Heart left ventricle (tissue), 16 donors: ENCODE measurements at regions of chr15 and their contacts with region 1.

Region 1: GRCh38 chr15:31435261-31435911 is 108.8 kb downstream of the KLF13 start:
- DNase-seq: peak; percentile 78 to 90 (median 86)
- ATAC-seq: peak; percentile 82 to 92 (median 86)
- H3K4me3 ChIP-seq: peak overlapping the region in 9 of 12 donors; percentile 8 to 54 (median 30)
- H3K27ac ChIP-seq: peak overlapping the region; percentile 50 to 94 (median 68)
- H3K4me1 ChIP-seq: peaks cover 0 to 52% (median 21%) of the 10 kb centered on the region in 12 donors
- H3K27me3 ChIP-seq: no peaks in the 10 kb centered on the region
- CTCF ChIP-seq: peak; percentile 58 to 95 (median 80)
- POLR2A ChIP-seq: peak in 1 of 2 donors; percentile 10

Region 2: GRCh38 chr15:31200735-31201151 is 234.6 kb before region 1 on chr15:
- intact Hi-C with region 1: loop called in 7 of 10 experiments (anchors 2 to 5 kb)
- DNase-seq: peak; percentile 74 to 88 (median 83)
- ATAC-seq: peak; percentile 72 to 97 (median 93)
- H3K4me3 ChIP-seq: no peak overlapping the region
- H3K27ac ChIP-seq: no peak overlapping the region
- H3K4me1 ChIP-seq: peaks cover 0 to 8% (median 0%) of the 10 kb centered on the region in 12 donors
- H3K27me3 ChIP-seq: no peaks in the 10 kb centered on the region
- CTCF ChIP-seq: peak; percentile 41 to 90 (median 54)
- POLR2A ChIP-seq: no peak

Region 3: GRCh38 chr15:31332020-31332680 is 103.2 kb before region 1 on chr15:
- intact Hi-C with region 1: loop called in 5 of 10 experiments (anchors 2 to 5 kb)
- DNase-seq: no peak
- ATAC-seq: no peak
- H3K4me3 ChIP-seq: no peak overlapping the region
- H3K27ac ChIP-seq: peak overlapping the region in 11 of 12 donors; percentile 15 to 100 (median 50)
- H3K4me1 ChIP-seq: peaks cover 7 to 89% (median 83%) of the 10 kb centered on the region in 12 donors
- H3K27me3 ChIP-seq: no peaks in the 10 kb centered on the region
- CTCF ChIP-seq: no peak
- POLR2A ChIP-seq: no peak

Region 4: GRCh38 chr15:31365655-31366127 is 69.7 kb before region 1 on chr15:
- intact Hi-C with region 1: loop called in 7 of 10 experiments (anchors 1 to 10 kb)
- DNase-seq: peak; percentile 89 to 98 (median 93)
- ATAC-seq: peak; percentile 89 to 92 (median 91)
- H3K4me3 ChIP-seq: peak overlapping the region in 11 of 12 donors; percentile 7 to 47 (median 35)
- H3K27ac ChIP-seq: peak overlapping the region; percentile 87 to 96 (median 92)
- H3K4me1 ChIP-seq: peaks cover 31 to 100% (median 92%) of the 10 kb centered on the region in 12 donors
- H3K27me3 ChIP-seq: no peaks in the 10 kb centered on the region
- CTCF ChIP-seq: peak in 11 of 12 donors; percentile 8 to 66 (median 43)
- POLR2A ChIP-seq: peak in 1 of 2 donors; percentile 31

Region 5: DNA sequence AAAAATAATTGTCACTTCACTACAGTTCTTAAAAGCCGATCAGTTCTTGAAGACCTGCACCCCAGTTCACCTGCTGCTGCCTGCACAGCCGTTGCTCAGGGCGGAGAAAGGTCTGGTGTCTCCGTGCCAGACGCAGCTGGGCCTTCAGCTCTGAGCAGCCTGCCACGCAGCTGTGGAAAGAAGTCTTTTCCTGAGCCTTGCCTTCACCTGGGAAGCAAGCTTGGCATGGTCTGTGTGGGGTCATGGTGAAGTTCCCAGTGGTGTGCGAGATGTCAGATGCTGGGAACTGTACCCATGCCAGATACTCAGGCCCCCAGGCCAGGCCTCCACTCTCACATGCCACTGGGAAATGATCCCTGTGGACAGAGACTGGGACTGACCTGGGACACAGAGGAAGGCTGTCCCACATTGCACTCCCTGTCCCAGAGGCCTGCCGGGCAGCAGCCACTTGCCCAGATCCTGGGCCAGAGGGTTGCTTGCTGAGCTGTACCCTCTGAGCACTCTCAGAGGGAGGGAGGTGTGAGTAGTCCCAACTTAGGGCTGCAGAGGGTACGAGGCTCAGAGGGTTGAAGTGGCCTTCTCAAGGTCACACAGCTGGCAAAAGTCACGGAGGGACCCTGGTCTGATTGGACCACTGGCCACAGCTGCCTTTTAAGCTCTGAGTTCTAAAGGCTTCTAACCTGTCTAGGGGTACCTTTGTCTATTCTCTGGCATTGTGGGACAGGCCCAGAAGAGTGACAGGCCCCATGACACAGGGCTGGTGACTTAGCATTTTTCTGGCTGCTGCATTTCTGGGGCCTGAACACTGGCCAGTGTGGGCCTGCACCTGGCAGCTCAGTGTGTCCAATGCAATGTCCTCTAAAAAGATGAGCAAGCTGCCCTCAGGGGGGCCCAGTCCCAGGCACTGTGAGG is 53.3 kb before region 1 on chr15:
- intact Hi-C with region 1: loop called in 1 of 10 experiments (anchors 5 kb)
- DNase-seq: no peak
- ATAC-seq: peak in 3 of 4 donors; percentile 48 to 61 (median 49)
- H3K4me3 ChIP-seq: no peak overlapping the region
- H3K27ac ChIP-seq: peak overlapping the region in 11 of 12 donors; percentile 43 to 75 (median 69)
- H3K4me1 ChIP-seq: peaks cover 0 to 53% (median 28%) of the 10 kb centered on the region in 12 donors
- H3K27me3 ChIP-seq: no peaks in the 10 kb centered on the region
- CTCF ChIP-seq: no peak
- POLR2A ChIP-seq: no peak

Region 6: DNA sequence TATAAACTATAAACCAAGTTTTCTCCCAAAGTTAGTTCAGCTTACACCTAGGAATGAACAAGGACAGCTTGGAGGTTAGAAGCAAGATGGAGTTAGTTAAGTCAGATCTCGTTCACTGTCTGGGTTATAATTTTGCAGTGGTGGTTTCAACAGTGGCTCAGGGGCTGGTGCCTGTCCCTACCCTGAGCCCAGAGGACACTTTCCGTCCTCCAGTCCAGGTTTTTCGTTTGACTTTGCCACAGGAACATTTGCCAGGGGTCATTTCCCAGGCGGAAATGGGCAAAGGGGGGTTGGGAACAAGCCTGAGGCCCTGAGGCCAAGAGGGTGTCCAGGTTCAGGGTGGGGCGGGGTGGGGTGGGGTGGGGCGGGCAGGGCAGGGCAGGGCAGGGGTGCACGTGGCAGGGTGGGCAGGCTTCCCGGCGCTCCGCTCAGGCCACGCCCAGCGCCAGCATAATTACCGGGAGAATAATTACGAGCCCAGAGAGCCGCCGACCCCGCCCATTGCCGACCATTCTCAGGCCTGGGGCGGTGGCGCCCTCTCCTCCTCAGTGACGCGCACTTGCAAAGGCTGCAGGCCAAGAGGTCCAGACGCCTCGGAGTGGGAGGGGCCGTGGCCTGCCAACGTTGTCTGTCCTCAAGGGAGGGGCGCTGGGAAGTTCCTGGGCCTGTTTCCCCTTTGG is 38.4 kb before region 1 on chr15:
- intact Hi-C with region 1: loop called in 3 of 10 experiments (anchors 2 to 5 kb)
- DNase-seq: peak; percentile 92 to 96 (median 93)
- ATAC-seq: peak; percentile 88 to 94 (median 94)
- H3K4me3 ChIP-seq: peak overlapping the region in 5 of 12 donors; percentile 0 to 32 (median 13)
- H3K27ac ChIP-seq: peak overlapping the region; percentile 53 to 86 (median 74)
- H3K4me1 ChIP-seq: peaks cover 0 to 40% (median 25%) of the 10 kb centered on the region in 12 donors
- H3K27me3 ChIP-seq: no peaks in the 10 kb centered on the region
- CTCF ChIP-seq: peak in 7 of 12 donors; percentile 9 to 57 (median 37)
- POLR2A ChIP-seq: no peak

Region 7: DNA sequence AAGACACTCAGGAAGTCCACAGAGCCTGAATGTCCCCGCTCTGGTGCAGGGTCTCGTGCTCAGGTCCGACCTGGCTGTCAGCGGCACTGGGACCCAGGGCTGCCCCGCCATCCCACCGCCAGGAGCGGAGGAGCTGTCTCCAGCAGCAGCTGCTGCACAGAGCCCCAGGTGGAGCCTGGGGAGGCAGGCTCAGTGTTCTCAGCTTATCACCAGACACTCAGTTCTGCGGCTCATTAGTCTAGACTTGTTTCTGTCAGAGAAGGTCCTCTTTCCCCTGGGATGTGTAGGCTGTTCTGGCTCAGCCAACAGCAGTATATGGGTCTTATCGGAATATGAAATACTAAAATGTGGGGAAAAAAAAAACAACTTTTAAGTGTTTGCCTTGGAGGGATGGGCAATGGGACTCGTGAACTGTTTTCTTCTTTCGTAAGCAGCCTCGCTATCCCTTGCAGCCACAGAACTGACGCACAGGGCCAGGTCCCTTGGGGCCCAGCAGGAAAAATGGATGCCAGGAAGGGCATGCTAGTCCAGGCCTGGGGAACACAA is 32.8 kb before region 1 on chr15:
- intact Hi-C with region 1: loop called in 3 of 10 experiments (anchors 2 to 5 kb)
- DNase-seq: peak; percentile 67 to 85 (median 72)
- ATAC-seq: peak; percentile 35 to 84 (median 80)
- H3K4me3 ChIP-seq: peak overlapping the region in 3 of 12 donors; percentile 1 to 10 (median 2)
- H3K27ac ChIP-seq: peak overlapping the region in 11 of 12 donors; percentile 37 to 78 (median 55)
- H3K4me1 ChIP-seq: peaks cover 0 to 32% (median 18%) of the 10 kb centered on the region in 12 donors
- H3K27me3 ChIP-seq: no peaks in the 10 kb centered on the region
- CTCF ChIP-seq: no peak
- POLR2A ChIP-seq: peak in 1 of 2 donors; percentile 37

Region 8: DNA sequence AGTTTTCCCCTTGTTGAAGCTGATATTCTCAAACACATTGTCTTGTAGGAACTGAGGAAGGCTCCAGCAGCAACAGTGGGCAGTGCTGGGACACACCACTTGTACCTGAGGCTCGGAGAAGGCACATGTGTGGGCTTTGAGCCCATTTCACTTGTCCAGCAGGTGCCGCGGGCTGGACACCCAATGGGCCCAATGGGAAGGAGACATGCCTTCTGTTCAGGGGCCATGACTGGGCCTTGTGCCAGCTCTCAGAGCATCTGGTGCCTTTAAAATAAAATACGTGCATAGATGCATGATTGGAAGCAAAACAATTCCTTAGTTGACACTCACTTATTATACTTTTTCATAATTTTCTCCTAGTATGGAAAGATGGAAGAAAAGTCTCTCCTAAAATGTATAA is 225.4 kb after region 1 on chr15:
- intact Hi-C with region 1: no loop called
- DNase-seq: no peak
- ATAC-seq: no peak
- H3K4me3 ChIP-seq: no peak overlapping the region
- H3K27ac ChIP-seq: no peak overlapping the region
- H3K4me1 ChIP-seq: no peaks in the 10 kb centered on the region
- H3K27me3 ChIP-seq: no peaks in the 10 kb centered on the region
- CTCF ChIP-seq: no peak
- POLR2A ChIP-seq: no peak